ENCODE measurements at regions of chr4 and their contacts with region 1.

Region 1: GRCh38 chr4:73258686-73259570 is at the start of gene ANKRD17:
- DNase-seq: peak; percentile 96
- H3K4me3 ChIP-seq: peak within 1 kb of the TSS; percentile 73 to 94 (median 88)
- H3K27ac ChIP-seq: peak within 1 kb of the TSS; percentile 94 to 98 (median 97)
- H3K4me1 ChIP-seq: peaks cover 0 to 48% (median 43%) of the 10 kb centered on the region in 4 donors
- H3K27me3 ChIP-seq: no peaks in the 10 kb centered on the region
- CTCF ChIP-seq: peak in 3 of 4 experiments; percentile 18 to 41 (median 37)
- EP300 ChIP-seq: peak in 1 of 4 donors; percentile 42
- POLR2A ChIP-seq: peak; percentile 70 to 80
- total RNA-seq, gene ANKRD17: 41.1 to 55.1 (median 44.5) TPM

Region 2: DNA sequence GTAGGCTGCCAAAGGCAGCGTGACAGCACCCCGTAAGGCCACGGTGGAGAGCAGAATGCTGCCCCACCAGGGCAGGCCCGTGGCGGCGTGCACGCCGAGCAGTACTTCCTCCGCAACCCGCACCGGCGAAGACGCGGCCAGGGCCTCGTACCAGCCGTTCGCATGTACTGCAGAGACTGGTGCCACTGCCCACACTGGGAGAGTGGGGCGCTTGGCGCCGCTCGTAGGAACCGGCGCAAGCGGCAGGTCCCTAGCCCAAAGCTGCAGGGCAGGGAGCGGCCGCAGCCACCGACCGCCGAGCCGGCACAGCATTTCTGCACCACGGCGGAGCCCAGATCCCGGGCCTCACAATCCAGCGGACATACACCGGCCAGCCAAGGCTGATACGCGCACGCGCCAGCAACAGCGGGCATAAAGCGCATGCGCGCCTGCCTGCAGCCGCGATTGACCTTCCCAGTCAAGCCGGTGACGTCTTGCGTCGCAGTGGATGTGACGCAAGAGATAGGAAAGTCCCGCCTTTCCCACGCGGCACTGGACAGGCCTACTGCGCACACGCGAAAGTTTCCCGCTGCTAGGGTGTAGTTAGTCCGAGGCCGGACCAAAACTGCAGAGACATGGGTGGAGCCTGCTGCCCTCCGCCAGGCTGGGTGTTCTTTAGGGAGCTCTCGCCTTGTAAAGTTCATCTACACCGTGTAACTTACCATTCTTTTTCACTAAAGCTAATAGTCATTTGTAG is 189.4 kb before region 1 on chr4 and contains the start of gene COX18:
- intact Hi-C with region 1: loop called (anchors 1 kb)
- DNase-seq: peak; percentile 99
- H3K4me3 ChIP-seq: peak within 1 kb of the TSS; percentile 64 to 87 (median 76)
- H3K27ac ChIP-seq: peak within 1 kb of the TSS; percentile 92 to 97 (median 94)
- H3K4me1 ChIP-seq: peaks cover 0 to 34% (median 21%) of the 10 kb centered on the region in 4 donors
- H3K27me3 ChIP-seq: no peaks in the 10 kb centered on the region
- CTCF ChIP-seq: no peak
- EP300 ChIP-seq: peak in 2 of 4 donors; percentile 62 to 91
- POLR2A ChIP-seq: peak; percentile 62 to 69
- total RNA-seq, gene COX18: 9.6 to 21.3 (median 16.3) TPM

Region 3: DNA sequence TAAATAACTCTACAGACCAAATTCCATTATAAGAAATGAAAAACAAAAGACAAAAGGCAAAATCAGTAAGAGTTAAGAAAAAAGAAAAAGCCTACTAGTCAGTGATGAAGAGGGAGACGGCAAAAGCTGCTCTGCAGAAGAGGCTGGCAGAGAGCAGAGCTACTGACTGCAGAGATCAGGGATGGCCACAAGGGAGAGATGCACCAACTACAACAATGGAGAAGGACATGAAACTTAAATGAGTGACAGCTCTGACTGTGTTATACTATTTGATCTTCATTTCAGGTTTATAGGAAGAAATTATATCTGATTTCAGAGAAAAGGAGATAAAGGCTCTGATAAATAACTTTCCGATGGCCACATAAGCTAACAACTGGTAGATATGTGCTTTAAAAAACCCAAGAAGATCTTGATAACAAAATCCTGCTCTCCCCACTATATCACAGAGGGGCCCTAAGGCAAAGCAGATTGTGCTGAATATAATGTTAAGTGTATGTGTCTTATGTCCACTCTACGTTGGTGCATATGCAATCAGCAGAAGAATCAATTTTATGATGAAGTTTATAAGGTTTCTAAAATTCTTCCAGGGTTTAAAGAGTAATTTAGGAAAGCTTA is 131.0 kb before region 1 on chr4:
- intact Hi-C with region 1: loop called (anchors 10 kb)
- DNase-seq: no peak
- H3K4me3 ChIP-seq: no peak overlapping the region
- H3K27ac ChIP-seq: no peak overlapping the region
- H3K4me1 ChIP-seq: no peaks in the 10 kb centered on the region
- H3K27me3 ChIP-seq: no peaks in the 10 kb centered on the region
- CTCF ChIP-seq: peak in 2 of 4 experiments; percentile 19
- EP300 ChIP-seq: no peak
- POLR2A ChIP-seq: no peak

Region 4: DNA sequence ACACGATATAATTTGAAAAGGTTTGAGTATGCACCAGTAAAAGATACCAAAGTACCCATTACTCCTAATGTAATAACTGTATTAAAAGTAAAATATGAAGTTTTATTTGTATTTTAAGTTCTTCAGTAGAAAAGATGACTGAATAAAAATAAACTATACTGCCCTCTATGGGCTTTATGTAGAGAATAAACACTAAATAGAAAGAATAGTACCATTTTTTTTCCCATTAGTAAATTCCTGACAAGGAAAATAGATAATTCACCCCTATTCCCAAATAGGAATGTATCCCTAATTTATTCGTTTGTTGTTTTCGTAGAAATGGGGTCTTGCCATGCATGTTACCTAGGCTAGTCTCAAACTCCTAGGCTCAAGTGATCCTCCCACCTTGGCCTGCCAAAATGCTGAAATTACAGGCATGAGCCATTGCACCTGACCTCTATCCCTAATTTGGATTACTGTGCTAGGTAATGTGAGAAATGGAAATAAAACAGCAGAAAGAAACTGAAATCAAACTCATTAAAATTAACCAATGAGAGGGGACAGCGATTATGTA is 115.9 kb before region 1 on chr4:
- intact Hi-C with region 1: loop called (anchors 5 kb)
- DNase-seq: no peak
- H3K4me3 ChIP-seq: no peak overlapping the region
- H3K27ac ChIP-seq: no peak overlapping the region
- H3K4me1 ChIP-seq: no peaks in the 10 kb centered on the region
- H3K27me3 ChIP-seq: no peaks in the 10 kb centered on the region
- CTCF ChIP-seq: no peak
- EP300 ChIP-seq: no peak
- POLR2A ChIP-seq: no peak

Region 5: GRCh38 chr4:73222466-73223257 is 36.3 kb before region 1 on chr4:
- intact Hi-C with region 1: loop called (anchors 2 kb)
- DNase-seq: peak; percentile 68
- H3K4me3 ChIP-seq: peak overlapping the region; percentile 30 to 52 (median 48)
- H3K27ac ChIP-seq: peak overlapping the region; percentile 81 to 83 (median 82)
- H3K4me1 ChIP-seq: peaks cover 0 to 42% (median 30%) of the 10 kb centered on the region in 4 donors
- H3K27me3 ChIP-seq: no peaks in the 10 kb centered on the region
- CTCF ChIP-seq: no peak
- EP300 ChIP-seq: no peak
- POLR2A ChIP-seq: peak in 1 of 2 donors; percentile 18

Region 6: GRCh38 chr4:73329300-73329699 is 70.4 kb after region 1 on chr4:
- intact Hi-C with region 1: no loop called
- DNase-seq: no peak
- H3K4me3 ChIP-seq: no peak overlapping the region
- H3K27ac ChIP-seq: no peak overlapping the region
- H3K4me1 ChIP-seq: no peaks in the 10 kb centered on the region
- H3K27me3 ChIP-seq: no peaks in the 10 kb centered on the region
- CTCF ChIP-seq: no peak
- EP300 ChIP-seq: no peak
- POLR2A ChIP-seq: no peak

Region 7: GRCh38 chr4:73533515-73534422 is 274.8 kb after region 1 on chr4:
- intact Hi-C with region 1: no loop called
- DNase-seq: no peak
- H3K4me3 ChIP-seq: no peak overlapping the region
- H3K27ac ChIP-seq: no peak overlapping the region
- H3K4me1 ChIP-seq: no peaks in the 10 kb centered on the region
- H3K27me3 ChIP-seq: no peaks in the 10 kb centered on the region
- CTCF ChIP-seq: no peak
- EP300 ChIP-seq: no peak
- POLR2A ChIP-seq: no peak

Measured in sigmoid colon (tissue), 7 donors.